ENCODE measurements at regions of chr5 and their contacts with region 1.

Region 1: DNA sequence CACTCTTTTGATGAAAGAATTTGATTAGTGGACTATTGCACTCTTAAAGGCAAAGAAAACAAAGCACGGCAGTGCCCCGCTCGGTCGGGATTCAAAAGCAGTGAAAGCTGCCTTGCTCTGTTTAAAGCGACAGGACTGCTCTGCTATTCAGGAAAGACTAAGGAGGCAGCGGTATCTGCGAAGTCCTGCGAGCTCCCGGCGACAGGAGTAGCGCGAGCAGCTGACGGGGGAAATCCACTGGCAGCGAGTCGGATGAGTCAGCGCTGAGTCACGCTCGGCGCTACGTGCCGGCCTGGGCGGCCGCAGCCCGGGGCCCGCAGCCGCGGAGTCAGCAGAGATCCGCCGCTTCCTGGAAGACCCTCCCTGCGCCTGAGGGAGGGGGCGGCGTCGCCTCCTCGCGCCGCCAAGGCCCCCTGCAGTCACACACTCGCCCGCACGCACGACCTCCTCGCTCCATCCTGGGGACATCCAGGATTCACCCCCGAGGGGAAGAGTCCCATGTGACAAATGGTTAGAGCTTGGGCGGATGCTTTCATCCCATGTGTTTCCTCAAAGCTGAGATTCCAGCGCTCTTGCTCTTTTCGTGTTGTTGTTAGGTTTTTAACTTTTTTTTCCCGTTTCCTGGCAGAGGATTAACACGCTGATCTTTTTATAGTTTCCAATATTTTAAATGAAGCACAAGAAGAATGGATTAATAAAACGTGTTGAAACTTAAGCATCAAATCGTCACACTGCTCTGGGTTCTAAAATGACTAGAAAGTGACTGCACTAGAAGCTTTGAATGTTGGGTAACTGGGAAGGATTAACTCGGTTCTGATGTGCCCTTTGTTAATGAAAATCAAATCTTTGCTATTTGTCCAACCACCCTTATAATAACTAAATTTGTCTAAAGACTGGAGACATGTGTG is 102.5 kb downstream of the ARRDC3 start:
- DNase-seq: peak; percentile 98
- H3K4me3 ChIP-seq: peak overlapping the region; percentile 2 to 71 (median 39)
- H3K27ac ChIP-seq: peak overlapping the region; percentile 99
- H3K4me1 ChIP-seq: peaks cover 24% of the 10 kb centered on the region
- H3K27me3 ChIP-seq: no peaks in the 10 kb centered on the region
- CTCF ChIP-seq: no peak
- POLR2A ChIP-seq: peak; percentile 86

Region 2: DNA sequence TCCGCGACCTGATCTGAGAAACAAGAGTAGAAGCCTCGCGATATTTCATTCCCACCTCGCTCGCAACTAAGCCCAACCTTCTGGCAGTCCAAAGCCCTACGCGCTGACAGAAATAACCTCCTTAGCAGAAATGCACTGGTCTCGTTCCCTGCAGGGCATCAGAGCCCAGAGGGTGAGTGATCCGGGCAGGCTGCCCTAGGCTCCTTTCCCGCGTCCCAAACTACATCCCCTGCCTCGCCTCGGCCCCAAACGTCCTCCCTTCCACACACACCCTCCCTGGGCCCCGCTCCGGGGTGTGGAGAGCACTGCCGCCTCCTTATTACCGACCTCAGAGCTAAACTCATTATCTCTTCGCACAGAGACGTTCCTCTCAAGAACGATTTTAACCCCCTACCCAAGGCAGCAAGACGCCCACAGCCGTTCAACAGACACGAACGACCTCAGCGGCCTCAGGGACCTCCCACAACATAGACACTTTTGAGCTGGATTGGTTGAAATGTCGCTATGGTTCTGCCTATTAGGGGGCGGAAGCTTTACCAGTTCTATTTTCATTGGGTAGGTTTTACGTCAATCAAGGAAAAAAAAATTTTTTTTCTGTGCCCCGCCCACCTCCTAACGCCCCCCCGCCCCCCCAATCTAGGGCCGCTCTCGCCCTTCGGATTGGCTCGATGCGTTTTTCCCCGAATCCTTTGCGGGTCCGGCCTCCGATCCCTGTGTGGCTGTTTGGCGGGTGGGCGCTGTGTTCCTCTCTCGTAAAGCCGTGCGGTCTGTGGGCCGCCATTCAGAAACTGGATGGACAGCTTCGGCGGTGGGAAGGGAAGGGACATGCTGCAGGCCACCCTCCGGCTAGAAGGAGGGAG is 871.1 kb before region 1 on chr5 and contains the start of gene CETN3:
- CTCF ChIA-PET with region 1: no interaction called
- POLR2A ChIA-PET with region 1: no interaction called
- dilution Hi-C with region 1: no loop called
- intact Hi-C with region 1: loop called (anchors 5 kb)
- DNase-seq: peak; percentile 96
- H3K4me3 ChIP-seq: peak within 1 kb of the TSS; percentile 82 to 95 (median 83)
- H3K27ac ChIP-seq: peak within 1 kb of the TSS; percentile 94
- H3K4me1 ChIP-seq: peaks cover 15% of the 10 kb centered on the region
- H3K27me3 ChIP-seq: no peaks in the 10 kb centered on the region
- CTCF ChIP-seq: no peak
- POLR2A ChIP-seq: peak; percentile 94
- total RNA-seq, gene CETN3: 15.5 and 17.3 TPM in 2 replicates

Region 3: GRCh38 chr5:90968319-90968718 is 312.3 kb before region 1 on chr5:
- CTCF ChIA-PET with region 1: no interaction called
- POLR2A ChIA-PET with region 1: no interaction called
- dilution Hi-C with region 1: no loop called
- intact Hi-C with region 1: loop called (anchors 2 kb)
- DNase-seq: no peak
- H3K4me3 ChIP-seq: no peak overlapping the region
- H3K27ac ChIP-seq: peak overlapping the region; percentile 57
- H3K4me1 ChIP-seq: peaks cover 32% of the 10 kb centered on the region
- H3K27me3 ChIP-seq: no peaks in the 10 kb centered on the region
- CTCF ChIP-seq: no peak
- POLR2A ChIP-seq: no peak

Region 4: GRCh38 chr5:91101600-91102379 is 178.8 kb before region 1 on chr5:
- CTCF ChIA-PET with region 1: interaction called, 7 read pairs
- POLR2A ChIA-PET with region 1: no interaction called
- dilution Hi-C with region 1: no loop called
- intact Hi-C with region 1: loop called (anchors 1 kb)
- DNase-seq: peak; percentile 85
- H3K4me3 ChIP-seq: no peak overlapping the region
- H3K27ac ChIP-seq: no peak overlapping the region
- H3K4me1 ChIP-seq: no peaks in the 10 kb centered on the region
- H3K27me3 ChIP-seq: no peaks in the 10 kb centered on the region
- CTCF ChIP-seq: peak; percentile 67 to 70
- POLR2A ChIP-seq: no peak

Region 5: GRCh38 chr5:91132550-91132949 is 148.1 kb before region 1 on chr5:
- CTCF ChIA-PET with region 1: no interaction called
- POLR2A ChIA-PET with region 1: no interaction called
- dilution Hi-C with region 1: no loop called
- intact Hi-C with region 1: no loop called
- DNase-seq: peak; percentile 66
- H3K4me3 ChIP-seq: no peak overlapping the region
- H3K27ac ChIP-seq: no peak overlapping the region
- H3K4me1 ChIP-seq: peaks cover 3% of the 10 kb centered on the region
- H3K27me3 ChIP-seq: no peaks in the 10 kb centered on the region
- CTCF ChIP-seq: no peak
- POLR2A ChIP-seq: no peak

Region 6: DNA sequence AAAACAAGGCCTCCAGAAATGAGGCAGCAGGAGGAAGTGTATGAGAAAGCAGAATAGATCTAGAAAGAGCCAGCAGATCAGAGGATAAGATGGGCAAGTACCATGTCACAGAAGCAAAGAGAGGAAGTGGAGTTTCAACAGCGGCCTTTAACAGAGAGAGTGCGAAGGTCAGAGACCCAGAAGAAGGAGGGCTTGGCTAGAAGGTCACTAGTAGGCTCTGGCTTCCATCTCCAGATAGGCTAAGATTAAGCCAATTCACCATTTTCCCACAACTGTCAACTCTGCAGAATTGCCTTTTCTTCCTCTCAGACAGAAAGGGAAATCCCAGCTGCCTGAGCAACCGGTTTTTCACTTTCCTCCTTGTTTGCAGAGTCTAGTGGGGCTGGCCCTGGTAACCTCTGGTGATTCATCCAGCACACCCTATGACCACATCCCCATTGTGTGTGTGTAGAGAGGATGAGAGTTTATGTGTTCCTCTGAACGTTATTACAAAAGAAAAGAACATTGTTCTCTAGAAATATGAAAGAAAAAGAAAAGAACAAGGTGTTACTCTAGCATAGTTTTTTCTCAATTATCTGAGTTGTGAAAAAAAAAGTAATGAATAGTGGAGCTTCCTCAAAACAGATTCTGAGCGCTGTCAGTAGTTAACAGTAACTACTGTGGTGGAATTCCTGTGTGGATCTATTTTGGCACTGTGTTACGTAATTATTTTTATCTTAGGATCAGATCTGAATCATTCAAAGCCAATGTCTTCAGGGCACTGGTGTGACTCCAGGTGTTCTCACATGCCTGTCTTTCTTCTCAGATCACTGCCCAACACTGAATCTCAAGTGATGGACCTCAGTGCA is 117.9 kb before region 1 on chr5:
- CTCF ChIA-PET with region 1: interaction called, 4 read pairs
- POLR2A ChIA-PET with region 1: no interaction called
- dilution Hi-C with region 1: no loop called
- intact Hi-C with region 1: loop called (anchors 1 kb)
- DNase-seq: peak; percentile 98
- H3K4me3 ChIP-seq: no peak overlapping the region
- H3K27ac ChIP-seq: peak overlapping the region; percentile 84
- H3K4me1 ChIP-seq: peaks cover 42% of the 10 kb centered on the region
- H3K27me3 ChIP-seq: no peaks in the 10 kb centered on the region
- CTCF ChIP-seq: no peak
- POLR2A ChIP-seq: no peak

Region 7: GRCh38 chr5:91219803-91220371 is 60.7 kb before region 1 on chr5:
- CTCF ChIA-PET with region 1: interaction called, 19 read pairs
- POLR2A ChIA-PET with region 1: no interaction called
- dilution Hi-C with region 1: no loop called
- intact Hi-C with region 1: no loop called
- DNase-seq: peak; percentile 63
- H3K4me3 ChIP-seq: no peak overlapping the region
- H3K27ac ChIP-seq: no peak overlapping the region
- H3K4me1 ChIP-seq: no peaks in the 10 kb centered on the region
- H3K27me3 ChIP-seq: no peaks in the 10 kb centered on the region
- CTCF ChIP-seq: peak; percentile 30 to 57
- POLR2A ChIP-seq: no peak

Region 8: DNA sequence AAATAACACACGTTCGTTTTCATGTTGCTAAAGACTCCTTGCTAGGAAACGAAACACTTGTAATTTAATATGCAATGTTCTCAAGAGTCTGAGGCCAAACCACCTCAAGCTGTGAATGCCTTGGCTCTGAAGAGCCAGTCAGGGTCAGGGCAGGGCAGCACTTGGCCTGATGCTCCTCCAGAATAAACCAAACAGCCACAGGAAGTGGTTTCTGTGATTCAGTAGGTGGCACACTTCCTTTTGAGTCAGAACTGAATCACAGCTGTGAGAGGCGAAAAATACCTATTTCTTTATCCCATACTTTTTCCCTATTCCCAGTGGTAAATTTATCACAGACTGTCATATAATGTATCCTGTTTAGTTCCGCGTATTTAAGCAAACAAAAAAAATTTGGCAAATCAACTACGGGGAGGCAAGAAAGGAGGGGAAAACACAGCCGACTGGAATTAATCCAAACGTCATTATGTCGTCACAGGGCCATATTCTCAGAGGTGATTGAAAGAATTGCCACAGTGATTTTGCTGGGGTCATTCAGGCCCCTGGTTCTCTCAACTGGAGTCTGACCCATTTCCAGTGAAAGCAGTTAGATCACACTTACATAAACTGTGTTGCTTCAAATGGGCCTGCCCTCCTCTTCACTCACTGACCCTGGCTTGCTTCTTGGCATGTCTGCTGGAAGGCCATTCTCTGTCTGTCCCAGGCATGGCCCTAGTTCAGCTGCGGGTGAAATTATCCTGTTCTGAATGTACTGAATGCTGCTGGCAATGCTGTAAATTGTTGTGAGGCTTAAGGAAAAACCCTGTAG is 31.3 kb after region 1 on chr5:
- CTCF ChIA-PET with region 1: interaction called, 6 read pairs
- POLR2A ChIA-PET with region 1: interaction called, 6 read pairs
- dilution Hi-C with region 1: no loop called
- intact Hi-C with region 1: loop called (anchors 1 kb)
- DNase-seq: peak; percentile 97
- H3K4me3 ChIP-seq: no peak overlapping the region
- H3K27ac ChIP-seq: peak overlapping the region; percentile 100
- H3K4me1 ChIP-seq: peaks cover 33% of the 10 kb centered on the region
- H3K27me3 ChIP-seq: no peaks in the 10 kb centered on the region
- CTCF ChIP-seq: no peak
- POLR2A ChIP-seq: no peak